Activated CD4-positive, alpha-beta T cell treated with anti-CD3 and anti-CD28 coated beads for 36 hours (primary cell): ENCODE measurements at regions of chr22 and their contacts with region 1.

Region 1: DNA sequence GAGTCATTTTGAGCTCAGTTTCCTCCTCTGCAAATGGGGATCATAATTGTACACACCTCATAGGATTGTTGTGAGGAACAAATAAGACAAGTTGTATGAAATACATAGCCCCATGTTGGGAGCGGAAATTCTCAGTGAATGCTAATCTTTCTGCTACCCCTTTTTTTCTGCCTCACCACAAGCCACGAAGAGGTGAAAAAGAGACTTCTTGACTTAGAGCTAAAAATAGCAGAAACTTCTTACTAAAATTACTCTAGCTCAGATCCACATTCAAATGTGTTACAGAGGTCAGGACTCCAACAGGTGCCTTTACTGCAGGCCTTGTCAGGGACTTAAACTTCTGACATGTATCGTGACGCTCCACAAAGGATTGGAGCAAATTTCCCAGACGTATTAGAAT is 128.5 kb downstream of the MIAT start:
- DNase-seq: no peak
- ATAC-seq: no peak
- H3K4me3 Mint-ChIP-seq: no peak overlapping the region
- H3K27ac Mint-ChIP-seq: no peak overlapping the region
- H3K4me1 Mint-ChIP-seq: peaks cover 4% of the 10 kb centered on the region
- H3K27me3 Mint-ChIP-seq: no peaks in the 10 kb centered on the region

Region 2: DNA sequence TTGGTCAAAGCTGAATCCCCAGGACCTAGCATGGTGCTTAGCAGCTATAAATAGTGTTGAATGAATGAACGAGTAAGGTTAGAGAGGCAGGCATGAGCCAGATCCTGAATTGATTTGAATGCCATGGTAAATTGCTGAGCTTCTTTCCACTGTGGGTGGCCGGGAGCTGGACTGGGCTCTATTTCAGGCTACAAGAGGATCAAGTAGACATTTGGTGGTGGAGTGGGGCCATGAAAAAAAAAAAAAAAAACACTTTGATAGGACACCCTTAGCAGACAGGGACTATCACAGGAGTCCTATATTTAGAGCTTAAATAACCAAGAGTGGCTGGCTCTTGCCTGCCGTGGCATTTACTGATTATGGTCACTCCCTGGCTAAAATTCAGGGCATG is 50.9 kb before region 1 on chr22:
- CTCF ChIA-PET with region 1: no interaction called
- POLR2A ChIA-PET with region 1: interaction called, 12 read pairs
- intact Hi-C with region 1: no loop called
- DNase-seq: no peak
- ATAC-seq: no peak
- H3K4me3 Mint-ChIP-seq: no peak overlapping the region
- H3K27ac Mint-ChIP-seq: no peak overlapping the region
- H3K4me1 Mint-ChIP-seq: no peaks in the 10 kb centered on the region
- H3K27me3 Mint-ChIP-seq: no peaks in the 10 kb centered on the region